ENCODE measurements at regions of chr4 and their contacts with region 1.

Region 1: DNA sequence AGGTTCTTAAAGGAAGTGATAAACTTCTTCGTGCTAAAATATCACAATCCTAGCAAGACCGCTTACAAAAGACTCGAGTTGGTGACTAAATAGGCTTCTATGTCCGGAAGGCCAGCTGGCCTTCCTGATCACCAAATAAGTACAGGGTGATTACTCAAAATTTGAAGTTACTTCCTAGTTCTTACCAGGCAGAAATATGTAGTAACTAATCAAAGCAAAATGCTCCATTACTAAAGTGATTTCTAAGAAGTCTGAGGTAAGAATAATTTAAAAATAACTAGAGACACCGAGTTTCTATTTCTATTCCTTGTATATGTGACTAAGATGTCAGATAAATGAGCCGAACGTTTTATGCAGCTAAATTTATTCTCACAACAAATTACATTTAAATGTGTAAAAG is 62.2 kb downstream of the NSUN7 start:
- DNase-seq: no peak

Region 2: GRCh38 chr4:40587823-40588222 is 224.1 kb before region 1 on chr4:
- intact Hi-C with region 1: no loop called
- DNase-seq: no peak

Region 3: DNA sequence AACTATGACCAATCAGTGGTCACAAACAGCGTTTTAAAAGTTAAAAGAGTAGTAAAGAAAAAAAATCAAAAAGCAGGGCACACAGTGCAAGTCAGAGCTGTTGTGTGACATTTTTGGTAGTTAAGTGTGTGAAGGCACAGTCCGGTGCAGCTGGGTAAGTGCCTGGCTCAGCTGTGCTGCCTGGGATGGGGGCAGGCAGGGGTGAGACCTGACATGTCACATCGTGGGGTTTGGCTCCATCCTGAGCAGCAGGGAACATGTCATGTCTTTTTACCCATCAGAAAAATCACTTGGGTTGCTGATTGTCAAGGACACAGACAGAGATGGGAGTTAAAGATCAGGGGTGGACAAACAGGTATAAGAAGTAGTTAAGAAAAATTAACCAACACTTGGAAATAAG is 62.9 kb after region 1 on chr4:
- intact Hi-C with region 1: loop called (anchors 1 kb)
- DNase-seq: no peak

Region 4: DNA sequence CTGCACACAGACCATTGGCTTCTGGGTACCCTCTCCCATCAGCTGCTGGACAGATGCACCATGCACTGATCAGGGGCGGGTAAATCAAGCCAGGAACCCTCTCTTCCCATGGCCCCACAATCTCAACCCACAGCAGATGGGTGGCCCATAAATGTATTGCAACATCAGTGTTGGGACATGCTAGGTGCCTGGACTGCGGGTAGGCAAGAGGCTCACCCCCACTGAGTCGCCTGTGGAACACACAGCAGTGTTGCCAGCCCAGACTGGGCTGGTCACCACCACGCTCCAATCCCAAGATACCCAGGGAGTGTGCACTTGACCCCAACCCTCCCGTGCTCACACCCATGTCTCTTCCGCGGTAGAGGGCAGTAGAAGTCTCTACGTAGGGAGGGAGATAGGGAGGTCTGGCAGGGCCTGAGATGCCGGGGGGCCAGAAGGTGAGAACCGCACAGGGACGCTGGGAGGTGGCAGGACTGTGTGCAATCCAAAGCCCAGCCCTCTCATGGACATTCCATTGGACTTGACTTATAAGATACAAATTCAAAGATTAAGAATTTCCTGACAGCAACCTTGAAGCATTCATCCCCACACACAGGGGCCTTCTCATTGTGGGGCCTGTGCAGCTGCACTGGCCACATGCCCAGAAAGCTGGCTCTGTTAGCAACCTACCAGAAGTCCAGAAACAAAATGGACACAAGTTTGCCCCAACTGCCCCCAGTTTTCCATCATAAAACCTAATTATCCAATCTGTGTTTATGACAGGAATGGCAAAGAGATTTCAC is 121.5 kb after region 1 on chr4:
- intact Hi-C with region 1: no loop called
- DNase-seq: peak in 9 of 10 donors; percentile 46 to 97 (median 76)

Measured in posterior cingulate gyrus (tissue), 11 donors.